ENCODE measurements at regions of chr16 and their contacts with region 1.

Region 1: DNA sequence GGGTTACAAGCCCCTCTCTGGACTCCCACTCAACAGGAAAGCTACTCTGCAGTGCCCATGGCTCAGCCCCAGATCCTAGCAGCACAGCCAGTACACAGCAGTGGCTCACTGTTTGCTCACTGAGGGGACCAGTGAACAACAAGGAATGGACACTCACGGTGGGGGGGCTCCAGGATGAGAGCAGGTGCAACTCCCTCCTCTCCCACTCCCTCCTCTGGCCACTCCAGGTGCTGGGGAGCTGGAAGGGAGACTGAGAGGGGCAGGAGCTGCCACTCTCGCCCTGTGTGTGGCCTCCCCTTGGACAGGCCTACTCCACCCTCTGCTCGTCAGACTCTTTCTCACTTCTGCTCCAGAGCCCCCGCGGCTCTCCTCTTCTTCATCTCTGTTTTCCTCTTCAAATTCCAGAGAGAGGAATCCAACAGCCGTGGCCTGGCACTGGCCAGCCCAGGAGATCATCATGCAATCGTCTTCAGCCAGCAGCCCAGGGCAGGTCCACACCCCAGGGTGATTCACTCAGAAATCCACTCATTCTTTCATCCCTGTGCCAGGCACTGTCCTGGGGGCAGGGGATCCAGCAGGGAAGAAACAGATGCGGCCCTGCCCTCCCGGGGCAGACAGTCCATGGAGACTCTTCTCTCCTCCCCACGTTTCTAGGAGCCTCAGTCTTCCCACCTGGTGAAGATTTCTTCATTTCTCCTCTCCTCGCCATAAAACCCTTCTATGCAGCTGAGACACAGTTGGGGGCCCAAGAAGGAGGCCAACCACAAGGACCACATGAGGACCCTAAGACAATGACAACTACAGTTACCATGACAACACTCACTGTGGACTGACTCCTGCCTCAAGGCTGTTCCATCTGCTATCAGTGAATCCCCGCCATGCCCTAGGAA is 30.7 kb downstream of the CFAP20 start:
- DNase-seq: peak; percentile 46
- H3K4me3 ChIP-seq: no peak overlapping the region
- H3K27ac ChIP-seq: no peak overlapping the region
- H3K4me1 ChIP-seq: peaks cover 4% of the 10 kb centered on the region
- H3K27me3 ChIP-seq: no peaks in the 10 kb centered on the region
- CTCF ChIP-seq: no peak

Region 2: GRCh38 chr16:57734925-57735754 is 363.3 kb before region 1 on chr16:
- CTCF ChIA-PET with region 1: interaction called, 11 read pairs
- dilution Hi-C with region 1: no loop called
- in situ Hi-C with region 1: no loop called
- intact Hi-C with region 1: no loop called
- DNase-seq: peak; percentile 100
- H3K4me3 ChIP-seq: peak overlapping the region; percentile 84 to 100 (median 96)
- H3K27ac ChIP-seq: peak overlapping the region; percentile 89
- H3K4me1 ChIP-seq: peaks cover 13% of the 10 kb centered on the region
- H3K27me3 ChIP-seq: no peaks in the 10 kb centered on the region
- CTCF ChIP-seq: no peak

Region 3: GRCh38 chr16:58047557-58048348 is 50.7 kb before region 1 on chr16:
- CTCF ChIA-PET with region 1: no interaction called
- dilution Hi-C with region 1: no loop called
- in situ Hi-C with region 1: no loop called
- intact Hi-C with region 1: no loop called
- DNase-seq: no peak
- H3K4me3 ChIP-seq: no peak overlapping the region
- H3K27ac ChIP-seq: no peak overlapping the region
- H3K4me1 ChIP-seq: no peaks in the 10 kb centered on the region
- H3K27me3 ChIP-seq: no peaks in the 10 kb centered on the region
- CTCF ChIP-seq: no peak